ENCODE measurements at regions of chr6 and their contacts with region 1.

Region 1: GRCh38 chr6:138115877-138116660 is 8.8 kb upstream of the PERP start:
- DNase-seq: peak; percentile 77
- H3K4me3 ChIP-seq: no peak overlapping the region
- H3K27ac ChIP-seq: no peak overlapping the region
- H3K4me1 ChIP-seq: no peaks in the 10 kb centered on the region
- H3K27me3 ChIP-seq: no peaks in the 10 kb centered on the region
- CTCF ChIP-seq: peak; percentile 70

Region 2: GRCh38 chr6:138222901-138223546 is 107.0 kb after region 1 on chr6:
- CTCF ChIA-PET with region 1: no interaction called
- POLR2A ChIA-PET with region 1: no interaction called
- intact Hi-C with region 1: no loop called
- DNase-seq: no peak
- H3K4me3 ChIP-seq: no peak overlapping the region
- H3K27ac ChIP-seq: no peak overlapping the region
- H3K4me1 ChIP-seq: peaks cover 3% of the 10 kb centered on the region
- H3K27me3 ChIP-seq: no peaks in the 10 kb centered on the region
- CTCF ChIP-seq: no peak

Region 3: DNA sequence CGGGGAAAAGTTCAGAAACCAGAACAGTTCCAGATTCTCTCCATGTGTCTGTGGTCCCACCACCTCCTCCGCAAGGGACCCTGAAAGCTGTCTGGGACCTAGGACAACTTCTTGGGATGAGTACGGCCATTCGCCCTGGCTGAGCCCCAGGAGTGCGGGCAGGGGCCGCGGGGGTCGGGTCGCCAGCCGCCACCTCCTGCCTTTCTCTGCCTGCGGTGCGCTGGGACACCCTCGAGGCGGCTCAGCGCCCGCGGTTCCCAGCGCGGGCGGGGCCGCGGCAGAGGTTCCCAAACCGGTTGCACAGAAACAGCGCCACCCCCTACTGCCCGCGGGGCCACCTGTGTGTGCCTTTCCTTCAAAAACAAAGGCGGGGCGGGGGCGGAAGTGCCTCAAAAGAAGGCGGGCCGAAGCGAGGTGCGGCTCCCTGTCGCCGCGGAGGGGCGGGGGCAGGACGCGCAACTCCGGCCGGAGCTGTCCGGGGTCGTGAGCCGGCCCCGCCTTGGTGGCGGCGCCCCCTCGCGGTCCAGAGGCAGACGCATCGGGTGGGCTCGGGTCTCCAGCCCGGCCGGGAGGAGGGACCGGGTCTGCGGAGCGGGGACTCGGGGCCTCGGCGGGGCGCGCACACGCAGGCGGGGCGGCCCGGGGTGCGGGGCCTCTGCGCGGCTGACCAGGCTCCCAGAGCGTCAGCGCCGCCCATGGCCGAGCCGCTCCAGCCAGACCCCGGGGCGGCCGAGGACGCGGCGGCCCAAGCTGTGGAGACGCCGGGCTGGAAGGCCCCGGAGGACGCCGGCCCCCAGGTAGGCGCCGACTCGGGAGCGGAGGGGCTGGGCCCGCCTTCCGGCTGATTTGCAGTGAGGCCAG is 288.0 kb after region 1 on chr6 and contains the start of gene HEBP2:
- CTCF ChIA-PET with region 1: no interaction called
- POLR2A ChIA-PET with region 1: interaction called, 3 read pairs
- intact Hi-C with region 1: loop called (anchors 2 kb)
- DNase-seq: peak; percentile 85
- H3K4me3 ChIP-seq: peak within 1 kb of the TSS; percentile 85
- H3K27ac ChIP-seq: peak within 1 kb of the TSS; percentile 58
- H3K4me1 ChIP-seq: no peaks in the 10 kb centered on the region
- H3K27me3 ChIP-seq: no peaks in the 10 kb centered on the region
- CTCF ChIP-seq: peak; percentile 46
- total RNA-seq, gene HEBP2: 8.7 and 14.7 TPM in 2 replicates

Region 4: DNA sequence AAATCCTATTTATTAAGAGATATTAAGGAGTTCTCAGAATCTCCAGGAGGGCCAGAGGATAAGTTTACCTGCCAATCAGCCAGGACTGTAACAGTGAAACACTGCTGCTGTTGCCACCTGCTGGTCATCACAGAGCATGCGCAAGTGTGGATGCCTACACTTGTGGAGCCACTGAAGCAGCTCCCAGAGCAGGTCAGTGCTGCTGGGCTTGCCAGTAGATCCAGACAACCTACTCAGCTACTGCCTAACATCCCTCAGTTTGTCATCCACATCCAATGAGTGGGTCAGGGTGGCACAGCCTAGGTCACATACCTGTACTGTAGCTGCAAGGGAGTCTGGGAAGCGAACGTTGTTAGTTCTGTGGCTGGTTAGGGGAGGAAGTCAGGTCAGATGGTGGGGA is 401.6 kb after region 1 on chr6:
- CTCF ChIA-PET with region 1: no interaction called
- POLR2A ChIA-PET with region 1: no interaction called
- intact Hi-C with region 1: loop called (anchors 10 kb)
- DNase-seq: peak; percentile 53
- H3K4me3 ChIP-seq: no peak overlapping the region
- H3K27ac ChIP-seq: no peak overlapping the region
- H3K4me1 ChIP-seq: peaks cover 8% of the 10 kb centered on the region
- H3K27me3 ChIP-seq: no peaks in the 10 kb centered on the region
- CTCF ChIP-seq: peak; percentile 78

Region 5: DNA sequence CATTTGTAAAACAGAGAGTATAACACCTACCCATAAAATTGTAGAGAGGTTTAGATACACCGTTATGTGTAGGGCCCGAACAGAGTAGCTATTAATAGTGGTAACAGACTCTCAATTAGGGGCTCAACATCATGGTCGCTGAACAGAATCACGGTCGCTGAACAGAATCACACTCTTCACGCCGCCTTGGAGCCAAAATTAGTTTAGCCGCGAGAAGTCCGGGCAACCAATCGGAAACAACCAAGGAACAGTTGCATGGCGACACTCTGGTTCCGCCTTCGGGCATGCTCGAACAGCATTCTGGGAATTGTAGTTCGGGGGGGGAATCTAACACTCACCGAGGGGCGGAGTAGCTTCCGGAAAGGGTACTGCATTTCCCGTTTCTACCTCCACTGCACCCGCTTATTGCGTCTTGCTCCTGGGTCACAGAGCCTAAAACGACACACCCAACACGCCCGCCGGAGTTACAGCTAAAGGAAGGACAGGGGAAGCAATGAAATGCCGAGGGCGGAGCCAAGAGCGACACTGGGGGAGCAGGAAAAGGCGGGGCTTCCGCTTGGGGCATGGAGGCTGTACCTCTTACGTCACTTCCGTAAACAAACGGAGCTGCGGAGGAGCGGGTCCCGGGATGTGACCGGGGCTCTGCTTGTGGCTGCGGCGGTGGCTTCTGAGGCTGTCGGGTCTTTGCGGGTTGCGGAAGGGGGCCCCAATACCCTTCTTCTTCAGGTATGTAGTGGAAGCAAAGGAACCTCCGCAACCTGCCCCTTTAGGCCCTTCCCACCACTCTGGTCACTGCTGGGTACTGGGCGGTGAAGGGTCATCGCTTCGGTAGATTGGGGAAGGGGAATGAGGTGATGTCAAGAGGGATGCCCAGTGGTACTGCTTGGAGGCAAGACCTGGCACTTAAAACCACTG is 657.4 kb after region 1 on chr6 and contains the start of gene CCDC28A:
- CTCF ChIA-PET with region 1: no interaction called
- POLR2A ChIA-PET with region 1: no interaction called
- intact Hi-C with region 1: loop called (anchors 5 kb)
- DNase-seq: peak; percentile 97
- H3K4me3 ChIP-seq: peak within 1 kb of the TSS; percentile 75
- H3K27ac ChIP-seq: peak within 1 kb of the TSS; percentile 94
- H3K4me1 ChIP-seq: peaks cover 7% of the 10 kb centered on the region
- H3K27me3 ChIP-seq: no peaks in the 10 kb centered on the region
- CTCF ChIP-seq: no peak
- total RNA-seq, gene CCDC28A: 9.8 and 12.3 TPM in 2 replicates

Measured in A673 (cell line).